Mammary epithelial cell (primary cell): ENCODE measurements at regions of chr11 and their contacts with region 1.

Region 1: DNA sequence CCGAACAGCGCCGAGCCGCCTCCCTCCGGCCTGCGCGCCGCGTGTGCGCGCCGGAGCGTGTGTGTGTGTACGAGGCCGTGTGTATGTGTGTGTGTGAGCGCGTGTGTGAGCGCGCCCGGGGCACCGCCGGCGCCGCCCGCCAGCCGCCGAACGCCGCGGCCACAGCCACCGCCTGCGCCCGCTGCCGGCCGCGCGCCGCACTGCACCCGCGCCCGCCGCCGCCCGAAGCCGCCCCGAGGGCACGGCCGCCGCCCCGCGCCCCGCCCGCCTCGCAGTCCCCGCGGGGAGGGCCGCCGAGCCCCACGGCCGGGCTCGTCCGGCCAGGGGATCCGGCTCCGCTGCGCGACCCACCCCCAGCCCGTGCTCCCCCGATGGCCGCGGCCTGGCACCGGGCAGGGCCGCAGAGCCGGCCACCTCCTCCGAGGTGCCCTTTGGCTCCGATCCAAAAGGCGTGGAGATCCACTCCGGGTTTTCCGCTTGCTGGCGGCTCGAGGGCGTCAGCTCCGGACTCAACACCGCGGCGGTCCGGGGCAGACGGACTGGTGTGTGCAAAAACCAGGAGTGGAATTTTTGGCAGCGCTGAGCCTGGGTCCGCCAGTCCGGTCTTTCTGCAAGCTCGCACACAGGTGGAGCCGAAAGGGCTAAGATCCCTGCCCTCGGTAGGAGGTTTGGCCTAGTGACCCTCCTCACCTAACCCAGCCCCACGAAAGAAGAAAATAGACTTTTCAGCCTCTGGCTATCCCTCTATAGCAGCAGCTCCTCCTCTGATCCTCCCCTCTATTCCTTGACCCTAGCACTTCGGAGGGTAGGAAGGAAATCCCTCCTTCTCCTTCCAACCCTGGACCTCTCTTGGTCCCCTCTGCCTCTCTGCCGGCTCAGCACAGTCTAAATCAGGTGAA is at the start of gene SYT7:
- DNase-seq: peak; percentile 96
- H3K4me3 ChIP-seq: peak within 1 kb of the TSS; percentile 55 to 80 (median 58)
- H3K27ac ChIP-seq: no peak within 1 kb of the TSS
- H3K4me1 ChIP-seq: peaks cover 8% of the 10 kb centered on the region
- H3K27me3 ChIP-seq: peaks cover 12% of the 10 kb centered on the region
- CTCF ChIP-seq: peak; percentile 5 to 21
- total RNA-seq, gene SYT7: 4.7 to 17.7 TPM

Region 2: DNA sequence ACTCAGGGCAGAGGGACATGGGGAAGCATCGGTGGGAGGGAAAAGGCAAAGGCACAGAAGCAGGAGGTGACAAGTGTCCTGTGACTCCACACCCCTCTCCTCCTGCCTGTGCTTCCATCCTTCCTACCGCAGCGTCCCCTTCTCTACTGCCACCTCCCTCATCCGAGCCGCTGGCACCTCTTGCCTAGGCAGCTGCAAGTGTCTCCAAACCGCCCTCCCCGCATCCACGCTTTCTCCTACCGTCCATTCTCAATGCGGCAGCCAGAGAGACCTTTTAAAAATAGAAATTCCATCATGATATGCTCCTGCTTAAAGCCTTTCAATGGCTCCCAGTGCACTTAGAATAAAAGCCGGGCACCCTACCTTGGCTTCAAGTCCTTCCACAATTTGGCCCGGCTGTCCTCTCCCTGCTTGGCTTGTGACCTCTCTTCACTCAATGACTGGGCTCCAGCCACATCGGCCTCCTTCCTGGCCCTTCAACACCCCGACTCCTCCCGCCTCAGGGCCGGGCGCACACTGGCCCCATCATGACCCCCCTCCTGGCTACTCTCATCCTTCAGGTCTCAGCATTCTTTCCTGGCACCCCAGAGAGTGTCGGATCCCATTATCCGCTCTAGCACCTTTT is 56.2 kb before region 1 on chr11:
- CTCF ChIA-PET with region 1: no interaction called
- dilution Hi-C with region 1: loop called (anchors 5 kb)
- in situ Hi-C with region 1: no loop called
- intact Hi-C with region 1: no loop called
- DNase-seq: no peak
- H3K4me3 ChIP-seq: no peak overlapping the region
- H3K27ac ChIP-seq: no peak overlapping the region
- H3K4me1 ChIP-seq: no peaks in the 10 kb centered on the region
- H3K27me3 ChIP-seq: no peaks in the 10 kb centered on the region
- CTCF ChIP-seq: no peak

Region 3: GRCh38 chr11:61596166-61596938 is 15.1 kb after region 1 on chr11:
- CTCF ChIA-PET with region 1: no interaction called
- dilution Hi-C with region 1: no loop called
- in situ Hi-C with region 1: no loop called
- intact Hi-C with region 1: no loop called
- DNase-seq: no peak
- H3K4me3 ChIP-seq: no peak overlapping the region
- H3K27ac ChIP-seq: no peak overlapping the region
- H3K4me1 ChIP-seq: peaks cover 25% of the 10 kb centered on the region
- H3K27me3 ChIP-seq: no peaks in the 10 kb centered on the region
- CTCF ChIP-seq: no peak

Region 4: GRCh38 chr11:61616434-61616833 is 35.2 kb after region 1 on chr11:
- CTCF ChIA-PET with region 1: no interaction called
- dilution Hi-C with region 1: no loop called
- in situ Hi-C with region 1: loop called in 1 of 2 experiments (anchors 5 kb)
- intact Hi-C with region 1: loop called (anchors 1 kb)
- DNase-seq: peak; percentile 68
- H3K4me3 ChIP-seq: no peak overlapping the region
- H3K27ac ChIP-seq: peak overlapping the region; percentile 56
- H3K4me1 ChIP-seq: peaks cover 22% of the 10 kb centered on the region
- H3K27me3 ChIP-seq: no peaks in the 10 kb centered on the region
- CTCF ChIP-seq: no peak

Region 5: GRCh38 chr11:61797263-61797944 is 216.1 kb after region 1 on chr11:
- CTCF ChIA-PET with region 1: no interaction called
- dilution Hi-C with region 1: no loop called
- in situ Hi-C with region 1: no loop called
- intact Hi-C with region 1: no loop called
- DNase-seq: peak; percentile 62
- H3K4me3 ChIP-seq: no peak overlapping the region
- H3K27ac ChIP-seq: no peak overlapping the region
- H3K4me1 ChIP-seq: peaks cover 9% of the 10 kb centered on the region
- H3K27me3 ChIP-seq: no peaks in the 10 kb centered on the region
- CTCF ChIP-seq: peak; percentile 83 to 89

Region 6: DNA sequence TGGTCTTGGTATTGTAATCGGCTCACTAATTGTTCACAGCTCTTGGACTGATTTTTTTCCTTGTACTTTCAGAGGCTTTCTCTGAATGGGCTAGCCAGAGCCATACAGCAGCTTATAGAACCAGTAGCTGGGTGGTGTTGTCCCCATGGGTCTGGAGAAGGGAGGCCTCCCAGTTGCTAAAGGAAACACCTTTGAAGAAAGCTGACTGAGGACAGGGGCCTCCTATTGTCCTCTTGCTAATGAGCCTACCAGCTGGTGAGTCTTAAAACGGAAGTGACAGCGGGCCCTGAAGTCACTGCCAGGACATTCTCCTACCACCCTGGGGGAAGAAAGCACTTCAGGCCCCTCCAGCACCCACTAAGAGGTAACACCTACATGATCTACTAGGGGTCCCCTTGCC is 300.1 kb after region 1 on chr11:
- CTCF ChIA-PET with region 1: no interaction called
- dilution Hi-C with region 1: no loop called
- in situ Hi-C with region 1: no loop called
- intact Hi-C with region 1: no loop called
- DNase-seq: no peak
- H3K4me3 ChIP-seq: no peak overlapping the region
- H3K27ac ChIP-seq: no peak overlapping the region
- H3K4me1 ChIP-seq: no peaks in the 10 kb centered on the region
- H3K27me3 ChIP-seq: no peaks in the 10 kb centered on the region
- CTCF ChIP-seq: no peak